GM10248 (cell line): ENCODE measurements at regions of chr13 and their contacts with region 1.

Region 1: DNA sequence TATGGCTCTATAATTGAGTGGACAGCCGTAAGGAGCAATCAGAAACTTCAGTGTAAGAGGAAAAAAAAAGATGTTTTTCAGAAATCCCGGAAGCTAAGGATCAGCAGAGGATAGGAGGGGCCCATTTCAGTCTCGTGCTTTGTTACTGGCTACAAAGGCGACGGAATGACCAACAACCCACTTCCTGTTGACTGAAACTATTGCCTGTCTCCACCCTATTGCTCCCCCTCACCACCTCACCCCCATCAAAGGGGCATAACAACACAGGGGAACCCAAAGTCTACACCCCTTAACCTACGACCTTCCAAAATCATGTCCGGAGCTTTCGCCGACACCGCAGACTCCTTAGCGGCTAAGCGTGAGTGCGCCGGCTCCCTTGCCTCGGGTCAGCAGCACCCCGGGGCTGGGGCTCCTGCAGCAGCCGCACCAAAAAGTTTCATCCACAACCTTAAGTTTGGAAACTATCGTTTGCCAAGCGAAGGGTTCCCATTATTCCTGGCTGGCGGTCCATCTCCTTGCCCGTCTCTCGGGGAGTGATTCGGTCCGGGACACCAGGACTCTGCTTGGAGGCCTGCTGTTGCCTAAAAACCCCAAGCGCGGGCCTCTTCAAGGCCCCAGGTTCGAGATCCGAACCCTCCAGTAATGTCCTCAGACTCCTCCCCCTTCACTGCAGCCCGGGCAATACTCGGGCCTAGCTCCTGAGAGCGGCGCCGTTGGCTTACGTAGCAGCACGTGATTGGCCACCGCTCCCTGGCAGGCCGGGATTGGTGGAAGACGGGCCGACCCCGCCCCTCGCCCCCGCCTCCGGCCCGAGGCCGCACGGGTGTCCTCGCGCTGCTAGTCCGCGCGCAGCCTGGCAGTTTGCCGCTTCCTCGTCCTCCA is at the start of gene TPP2:
- DNase-seq: peak; percentile 99
- CTCF ChIP-seq: no peak

Region 2: GRCh38 chr13:102580552-102581169 is 15.7 kb before region 1 on chr13:
- CTCF ChIA-PET with region 1: interaction called, 103 read pairs
- POLR2A ChIA-PET with region 1: no interaction called
- DNase-seq: peak; percentile 50
- CTCF ChIP-seq: peak; percentile 69

Region 3: DNA sequence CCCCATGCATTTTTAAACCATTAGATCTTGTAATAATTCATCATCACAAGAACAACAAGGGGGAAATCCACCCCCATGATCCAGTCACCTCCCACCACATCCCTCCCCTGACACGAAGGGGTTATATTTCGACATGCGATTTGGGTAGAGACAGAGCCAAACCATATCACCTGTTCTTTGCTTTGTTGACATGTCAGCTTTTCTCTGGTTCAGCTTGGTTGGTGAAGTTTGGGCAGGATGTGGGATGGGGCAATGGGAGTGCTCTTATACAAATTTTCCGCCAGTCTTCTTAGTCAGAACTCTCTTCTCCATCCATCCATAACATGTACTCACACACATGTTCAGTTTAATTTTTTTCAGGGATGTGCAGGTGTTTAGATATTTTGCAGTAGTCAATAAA is 13.3 kb after region 1 on chr13:
- CTCF ChIA-PET with region 1: interaction called, 19 read pairs
- POLR2A ChIA-PET with region 1: interaction called, 8 read pairs
- DNase-seq: no peak
- CTCF ChIP-seq: no peak

Region 4: DNA sequence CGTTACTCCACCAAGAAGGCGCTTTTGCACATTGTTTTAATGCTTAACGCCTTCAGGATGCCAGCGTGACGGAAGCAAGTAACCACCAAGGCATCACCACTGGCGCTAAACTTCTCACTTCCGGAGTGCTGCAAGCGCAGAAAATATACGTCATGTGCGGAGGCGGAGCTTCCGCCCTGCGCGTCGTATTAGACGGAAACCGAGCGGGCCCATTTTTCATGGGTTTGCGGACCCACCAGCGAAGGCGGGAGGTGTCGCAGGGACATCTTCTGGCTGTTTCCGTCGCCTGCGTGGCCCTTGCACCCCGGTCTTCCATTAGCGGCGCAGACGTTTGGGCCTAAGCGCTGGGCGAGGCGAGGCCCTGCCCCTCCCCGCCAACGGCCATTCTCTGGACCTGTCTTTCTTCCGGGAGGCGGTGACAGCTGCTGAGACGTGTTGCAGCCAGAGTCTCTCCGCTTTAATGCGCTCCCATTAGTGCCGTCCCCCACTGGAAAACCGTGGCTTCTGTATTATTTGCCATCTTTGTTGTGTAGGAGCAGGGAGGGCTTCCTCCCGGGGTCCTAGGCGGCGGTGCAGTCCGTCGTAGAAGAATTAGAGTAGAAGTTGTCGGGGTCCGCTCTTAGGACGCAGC is 249.4 kb after region 1 on chr13 and contains the start of gene ERCC5:
- CTCF ChIA-PET with region 1: interaction called, 13 read pairs
- POLR2A ChIA-PET with region 1: interaction called, 7 read pairs
- DNase-seq: peak; percentile 83
- CTCF ChIP-seq: peak; percentile 9